Naive thymus-derived CD4-positive, alpha-beta T cell (primary cell): ENCODE measurements at regions of chr5 and their contacts with region 1.

Region 1: DNA sequence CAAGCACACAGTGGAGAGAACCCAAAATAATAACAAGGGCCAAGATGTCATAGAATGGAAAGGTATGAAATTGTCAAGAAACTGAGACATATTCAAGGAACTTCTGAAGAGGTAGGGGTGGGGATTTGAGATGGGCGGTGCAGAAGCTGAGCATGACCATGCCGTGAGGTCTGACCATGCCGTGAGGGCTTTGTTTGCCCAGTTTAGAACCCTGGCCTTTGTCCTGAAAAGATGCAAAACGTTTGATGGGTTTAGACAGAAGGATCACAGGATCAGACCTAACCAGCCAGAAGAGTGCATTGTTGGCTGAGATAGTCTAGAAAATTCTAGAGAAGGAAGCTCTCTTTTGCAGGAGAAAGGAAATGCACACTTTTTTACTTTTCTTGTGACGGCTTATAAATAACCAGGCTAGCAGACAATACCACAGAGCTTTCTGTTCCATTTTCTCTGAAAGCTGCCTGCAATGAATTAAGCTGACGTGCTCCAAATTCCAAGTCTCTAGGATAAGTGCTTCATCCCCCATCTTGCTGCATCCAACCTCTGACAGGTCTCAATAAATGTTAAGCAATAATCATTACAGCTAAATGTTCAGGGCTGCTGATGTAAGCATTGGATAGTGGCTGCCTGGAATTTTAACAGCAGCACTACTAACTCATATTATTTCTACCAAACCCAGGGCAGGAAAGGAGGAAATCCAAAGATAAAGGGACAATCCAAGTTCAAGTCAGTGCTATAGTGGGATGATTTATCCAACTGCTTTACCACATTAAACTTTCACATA is 110.9 kb upstream of the IL6ST start:
- DNase-seq: peak in 2 of 9 donors; percentile 24 to 44
- ATAC-seq: no peak
- H3K4me3 ChIP-seq: no peak overlapping the region
- H3K4me3 Mint-ChIP-seq: peak overlapping the region; percentile 49 to 85 (median 70)
- H3K27ac ChIP-seq: peak overlapping the region; percentile 56
- H3K27ac Mint-ChIP-seq: peak overlapping the region; percentile 70 to 100 (median 90)
- H3K4me1 ChIP-seq: peaks cover 0 to 60% of the 10 kb centered on the region in 2 donors
- H3K4me1 Mint-ChIP-seq: peaks cover 33 to 95% (median 73%) of the 10 kb centered on the region in 7 donors
- H3K27me3 ChIP-seq: no peaks in the 10 kb centered on the region
- H3K27me3 Mint-ChIP-seq: no peaks in the 10 kb centered on the region

Region 2: DNA sequence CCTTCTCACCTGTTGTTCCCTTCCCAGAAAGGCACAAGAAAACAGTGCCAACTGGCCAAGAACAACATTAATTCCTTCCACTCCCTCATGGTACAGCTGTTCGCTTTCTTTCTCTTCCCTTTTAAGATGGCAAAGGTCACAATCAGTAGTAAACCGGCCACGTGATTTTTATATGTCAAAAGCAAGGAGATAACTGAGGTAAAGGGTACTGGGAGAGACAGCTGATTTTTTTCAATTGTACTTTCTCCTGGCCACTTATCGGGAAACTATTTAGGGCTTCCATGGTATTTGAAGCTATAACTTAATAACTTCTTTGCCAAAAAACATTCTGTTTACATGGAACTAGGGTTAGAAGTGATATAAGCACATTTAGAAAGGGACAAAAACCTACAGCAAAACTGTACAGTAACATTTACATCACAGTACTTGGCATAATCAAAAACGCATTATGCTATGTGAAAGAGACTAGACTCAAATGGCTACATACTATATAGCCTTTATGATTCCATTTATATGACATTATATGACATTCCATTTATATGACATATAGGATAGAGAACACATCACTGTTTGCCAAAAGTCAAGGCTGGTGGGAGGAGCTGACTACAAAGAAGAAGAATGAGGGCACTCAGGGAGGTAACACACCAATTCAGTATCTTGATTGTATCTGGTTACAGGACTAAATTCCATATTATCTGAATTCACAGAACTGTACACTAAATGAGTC is 595.7 kb before region 1 on chr5:
- CTCF ChIA-PET with region 1: no interaction called
- POLR2A ChIA-PET with region 1: no interaction called
- intact Hi-C with region 1: no loop called
- DNase-seq: no peak
- ATAC-seq: no peak
- H3K4me3 ChIP-seq: no peak overlapping the region
- H3K4me3 Mint-ChIP-seq: no peak overlapping the region
- H3K27ac ChIP-seq: no peak overlapping the region
- H3K27ac Mint-ChIP-seq: no peak overlapping the region
- H3K4me1 ChIP-seq: no peaks in the 10 kb centered on the region
- H3K4me1 Mint-ChIP-seq: peaks cover 10 to 50% (median 33%) of the 10 kb centered on the region in 7 donors
- H3K27me3 ChIP-seq: no peaks in the 10 kb centered on the region
- H3K27me3 Mint-ChIP-seq: no peaks in the 10 kb centered on the region

Region 3: GRCh38 chr5:56050551-56051255 is 55.0 kb before region 1 on chr5:
- CTCF ChIA-PET with region 1: no interaction called
- POLR2A ChIA-PET with region 1: interaction called, 58 read pairs
- intact Hi-C with region 1: no loop called
- DNase-seq: peak in 8 of 9 donors; percentile 4 to 77 (median 66)
- ATAC-seq: peak; percentile 71
- H3K4me3 ChIP-seq: peak overlapping the region; percentile 34
- H3K4me3 Mint-ChIP-seq: peak overlapping the region; percentile 60 to 92 (median 76)
- H3K27ac ChIP-seq: peak overlapping the region; percentile 62
- H3K27ac Mint-ChIP-seq: peak overlapping the region; percentile 77 to 95 (median 89)
- H3K4me1 ChIP-seq: peaks cover 11 to 76% of the 10 kb centered on the region in 2 donors
- H3K4me1 Mint-ChIP-seq: peaks cover 40 to 95% (median 74%) of the 10 kb centered on the region in 7 donors
- H3K27me3 ChIP-seq: no peaks in the 10 kb centered on the region
- H3K27me3 Mint-ChIP-seq: peaks cover 0 to 5% (median 0%) of the 10 kb centered on the region in 5 donors

Region 4: GRCh38 chr5:56095579-56096102 is 10.1 kb before region 1 on chr5:
- CTCF ChIA-PET with region 1: interaction called, 5 read pairs
- POLR2A ChIA-PET with region 1: interaction called, 78 read pairs
- intact Hi-C with region 1: loop called in 1 of 2 experiments (anchors 1 kb)
- DNase-seq: no peak
- ATAC-seq: no peak
- H3K4me3 ChIP-seq: no peak overlapping the region
- H3K4me3 Mint-ChIP-seq: peak overlapping the region in 9 of 10 donors; percentile 32 to 77 (median 56)
- H3K27ac ChIP-seq: peak overlapping the region; percentile 54
- H3K27ac Mint-ChIP-seq: peak overlapping the region; percentile 66 to 100 (median 91)
- H3K4me1 ChIP-seq: peaks cover 0 to 94% of the 10 kb centered on the region in 2 donors
- H3K4me1 Mint-ChIP-seq: peaks cover 56 to 97% (median 86%) of the 10 kb centered on the region in 7 donors
- H3K27me3 ChIP-seq: no peaks in the 10 kb centered on the region
- H3K27me3 Mint-ChIP-seq: no peaks in the 10 kb centered on the region

Region 5: GRCh38 chr5:56123531-56124243 is 18.0 kb after region 1 on chr5:
- CTCF ChIA-PET with region 1: interaction called, 7 read pairs
- POLR2A ChIA-PET with region 1: interaction called, 78 read pairs
- intact Hi-C with region 1: loop called (anchors 2 kb)
- DNase-seq: no peak
- ATAC-seq: peak; percentile 29
- H3K4me3 ChIP-seq: no peak overlapping the region
- H3K4me3 Mint-ChIP-seq: peak overlapping the region in 3 of 10 donors; percentile 3 to 38 (median 29)
- H3K27ac ChIP-seq: no peak overlapping the region
- H3K27ac Mint-ChIP-seq: peak overlapping the region in 8 of 9 donors; percentile 32 to 89 (median 74)
- H3K4me1 ChIP-seq: peaks cover 0 to 42% of the 10 kb centered on the region in 2 donors
- H3K4me1 Mint-ChIP-seq: peaks cover 21 to 59% (median 45%) of the 10 kb centered on the region in 7 donors
- H3K27me3 ChIP-seq: no peaks in the 10 kb centered on the region
- H3K27me3 Mint-ChIP-seq: no peaks in the 10 kb centered on the region

Region 6: GRCh38 chr5:56142620-56143372 is 37.1 kb after region 1 on chr5:
- CTCF ChIA-PET with region 1: interaction called, 9 read pairs
- POLR2A ChIA-PET with region 1: interaction called, 80 read pairs
- intact Hi-C with region 1: no loop called
- DNase-seq: peak in 1 of 9 donors; percentile 31
- ATAC-seq: peak; percentile 64
- H3K4me3 ChIP-seq: peak overlapping the region; percentile 24
- H3K4me3 Mint-ChIP-seq: peak overlapping the region; percentile 19 to 83 (median 77)
- H3K27ac ChIP-seq: peak overlapping the region; percentile 65
- H3K27ac Mint-ChIP-seq: peak overlapping the region; percentile 35 to 98 (median 86)
- H3K4me1 ChIP-seq: peaks cover 0 to 72% of the 10 kb centered on the region in 2 donors
- H3K4me1 Mint-ChIP-seq: peaks cover 42 to 91% (median 76%) of the 10 kb centered on the region in 7 donors
- H3K27me3 ChIP-seq: no peaks in the 10 kb centered on the region
- H3K27me3 Mint-ChIP-seq: peaks cover 0 to 2% (median 0%) of the 10 kb centered on the region in 5 donors

Region 7: GRCh38 chr5:56148453-56148971 is 42.8 kb after region 1 on chr5:
- CTCF ChIA-PET with region 1: interaction called, 5 read pairs
- POLR2A ChIA-PET with region 1: interaction called, 80 read pairs
- intact Hi-C with region 1: loop called (anchors 1 to 2 kb)
- DNase-seq: peak in 8 of 9 donors; percentile 52 to 84 (median 70)
- ATAC-seq: peak; percentile 87
- H3K4me3 ChIP-seq: peak overlapping the region; percentile 18
- H3K4me3 Mint-ChIP-seq: peak overlapping the region; percentile 45 to 74 (median 62)
- H3K27ac ChIP-seq: peak overlapping the region; percentile 61
- H3K27ac Mint-ChIP-seq: peak overlapping the region; percentile 87 to 97 (median 94)
- H3K4me1 ChIP-seq: peaks cover 0 to 76% of the 10 kb centered on the region in 2 donors
- H3K4me1 Mint-ChIP-seq: peaks cover 39 to 76% (median 70%) of the 10 kb centered on the region in 7 donors
- H3K27me3 ChIP-seq: no peaks in the 10 kb centered on the region
- H3K27me3 Mint-ChIP-seq: peaks cover 0 to 2% (median 0%) of the 10 kb centered on the region in 5 donors

Region 8: GRCh38 chr5:56155992-56156584 is 50.4 kb after region 1 on chr5:
- CTCF ChIA-PET with region 1: interaction called, 5 read pairs
- POLR2A ChIA-PET with region 1: interaction called, 24 read pairs
- intact Hi-C with region 1: loop called in 1 of 2 experiments (anchors 1 kb)
- DNase-seq: no peak
- ATAC-seq: peak; percentile 48
- H3K4me3 ChIP-seq: no peak overlapping the region
- H3K4me3 Mint-ChIP-seq: peak overlapping the region; percentile 25 to 96 (median 94)
- H3K27ac ChIP-seq: peak overlapping the region; percentile 61
- H3K27ac Mint-ChIP-seq: peak overlapping the region; percentile 87 to 98 (median 95)
- H3K4me1 ChIP-seq: peaks cover 11 to 71% of the 10 kb centered on the region in 2 donors
- H3K4me1 Mint-ChIP-seq: peaks cover 60 to 89% (median 79%) of the 10 kb centered on the region in 7 donors
- H3K27me3 ChIP-seq: peaks cover 0 to 2% of the 10 kb centered on the region in 2 donors
- H3K27me3 Mint-ChIP-seq: no peaks in the 10 kb centered on the region

Region 9: GRCh38 chr5:56522960-56523359 is 417.3 kb after region 1 on chr5:
- CTCF ChIA-PET with region 1: no interaction called
- POLR2A ChIA-PET with region 1: no interaction called
- intact Hi-C with region 1: no loop called
- DNase-seq: no peak
- ATAC-seq: no peak
- H3K4me3 ChIP-seq: no peak overlapping the region
- H3K4me3 Mint-ChIP-seq: no peak overlapping the region
- H3K27ac ChIP-seq: no peak overlapping the region
- H3K27ac Mint-ChIP-seq: no peak overlapping the region
- H3K4me1 ChIP-seq: no peaks in the 10 kb centered on the region
- H3K4me1 Mint-ChIP-seq: peaks cover 3 to 12% (median 6%) of the 10 kb centered on the region in 7 donors
- H3K27me3 ChIP-seq: no peaks in the 10 kb centered on the region
- H3K27me3 Mint-ChIP-seq: peaks cover 0 to under 1% (median 0%) of the 10 kb centered on the region in 5 donors